ENCODE measurements at regions of chr1 and their contacts with region 1.

Region 1: GRCh38 chr1:61332196-61332753 is 249.9 kb downstream of the NFIA start:
- DNase-seq: peak; percentile 68
- ATAC-seq: peak; percentile 97
- H3K4me3 ChIP-seq: no peak overlapping the region
- H3K27ac ChIP-seq: no peak overlapping the region
- H3K4me1 ChIP-seq: no peaks in the 10 kb centered on the region
- H3K27me3 ChIP-seq: no peaks in the 10 kb centered on the region; a peak in 1 of 4 replicates
- CTCF ChIP-seq: no peak
- EP300 ChIP-seq: peak; percentile 79 to 90; a peak in 2 of 4 replicates
- POLR2A ChIP-seq: no peak
- RAD21 ChIP-seq: no peak

Region 2: DNA sequence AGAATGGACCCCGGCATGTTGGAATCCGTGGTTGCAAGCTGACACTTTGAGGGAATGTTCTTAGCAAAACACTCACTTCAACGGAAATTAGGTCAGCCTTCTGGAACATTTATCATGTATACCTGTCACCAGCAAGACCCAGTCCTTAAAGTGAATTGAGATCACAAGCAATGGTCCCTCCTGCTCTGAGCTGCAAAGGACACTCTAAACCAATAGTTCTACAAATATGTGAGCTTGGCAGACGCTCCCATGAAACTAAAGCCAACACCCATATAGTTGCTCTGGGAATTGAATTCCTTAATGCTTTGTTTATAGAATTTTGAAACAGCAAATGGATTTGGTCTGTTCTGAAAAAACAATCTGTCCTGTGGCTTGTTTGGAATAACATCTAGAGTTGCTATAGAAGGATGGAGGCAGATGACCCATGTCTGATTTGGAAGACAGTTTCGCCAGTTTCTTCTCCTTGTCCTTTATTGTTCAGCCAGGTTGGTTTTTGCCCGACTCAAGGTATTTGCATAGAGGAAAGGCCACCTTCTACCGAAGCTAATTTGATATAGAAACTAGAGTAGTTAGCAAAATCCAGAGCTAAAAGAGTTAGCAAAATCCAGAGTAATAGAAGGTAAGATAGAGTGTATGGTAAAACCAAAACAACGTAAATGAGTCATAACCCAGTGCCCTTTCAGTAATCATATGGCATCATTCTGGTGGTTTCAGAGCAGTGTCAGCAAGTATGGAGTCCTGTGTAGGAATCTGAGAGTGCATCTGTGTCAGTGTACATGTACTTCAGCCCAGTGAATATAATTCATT is 13.8 kb before region 1 on chr1:
- CTCF ChIA-PET with region 1: interaction called, 3 read pairs
- POLR2A ChIA-PET with region 1: no interaction called
- RAD21 ChIA-PET with region 1: no interaction called
- SMC1A ChIA-PET with region 1: no interaction called
- in situ Hi-C with region 1: no loop called
- intact Hi-C with region 1: loop called (anchors 2 kb)
- DNase-seq: peak; percentile 71
- ATAC-seq: peak; percentile 99
- H3K4me3 ChIP-seq: no peak overlapping the region
- H3K27ac ChIP-seq: no peak overlapping the region
- H3K4me1 ChIP-seq: no peaks in the 10 kb centered on the region; the same call in 1 of the 2 replicates
- H3K27me3 ChIP-seq: no peaks in the 10 kb centered on the region; a peak in 1 of 4 replicates
- CTCF ChIP-seq: no peak
- EP300 ChIP-seq: peak; percentile 76 to 82; a peak in 2 of 4 replicates
- POLR2A ChIP-seq: no peak
- RAD21 ChIP-seq: no peak

Region 3: DNA sequence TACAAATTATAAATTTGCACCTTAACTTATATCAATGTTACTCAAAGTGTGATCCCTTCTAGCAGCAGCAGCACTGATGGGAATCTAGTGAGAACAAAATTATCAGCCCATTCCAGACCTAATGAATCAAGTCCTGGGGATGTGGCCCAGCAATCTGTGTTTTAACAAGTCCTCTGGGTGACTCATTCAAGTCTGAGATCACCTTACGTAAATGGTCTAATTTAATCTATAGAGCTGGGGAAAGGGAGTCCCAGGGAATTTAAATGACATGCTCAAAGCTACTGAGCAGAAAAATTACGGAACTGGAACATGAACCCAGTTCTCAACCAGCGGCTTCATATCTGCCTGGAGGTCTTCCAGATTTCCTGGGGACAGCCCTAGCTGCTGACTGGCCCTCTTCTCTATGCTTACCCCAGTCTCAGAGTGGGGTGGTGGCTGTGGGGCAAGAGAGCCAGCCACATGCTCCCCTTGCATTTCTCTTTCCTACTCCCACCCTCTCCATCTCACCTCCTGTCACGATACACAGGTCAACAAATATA is 172.6 kb after region 1 on chr1:
- CTCF ChIA-PET with region 1: no interaction called
- POLR2A ChIA-PET with region 1: no interaction called
- RAD21 ChIA-PET with region 1: no interaction called
- SMC1A ChIA-PET with region 1: no interaction called
- in situ Hi-C with region 1: no loop called
- intact Hi-C with region 1: no loop called
- DNase-seq: no peak
- ATAC-seq: no peak
- H3K4me3 ChIP-seq: no peak overlapping the region
- H3K27ac ChIP-seq: no peak overlapping the region
- H3K4me1 ChIP-seq: no peaks in the 10 kb centered on the region
- H3K27me3 ChIP-seq: no peaks in the 10 kb centered on the region; a peak in 1 of 4 replicates
- CTCF ChIP-seq: no peak
- EP300 ChIP-seq: no peak
- POLR2A ChIP-seq: no peak
- RAD21 ChIP-seq: no peak

Measured in GM12878 (cell line).